Left cardiac atrium (tissue), 4 donors: ENCODE measurements at regions of chr6 and their contacts with region 1.

Region 1: GRCh38 chr6:41027799-41028628 is 11.0 kb downstream of the UNC5CL start:
- DNase-seq: peak; percentile 90
- ATAC-seq: peak; percentile 96 to 97

Region 2: GRCh38 chr6:40894962-40895799 is 132.8 kb before region 1 on chr6:
- intact Hi-C with region 1: loop called (anchors 2 to 10 kb)
- DNase-seq: peak; percentile 64
- ATAC-seq: peak; percentile 77 to 87